Activated CD4-positive, alpha-beta T cell treated with anti-CD3 and anti-CD28 coated beads for 36 hours (primary cell): ENCODE measurements at regions of chr2 and their contacts with region 1.

Region 1: DNA sequence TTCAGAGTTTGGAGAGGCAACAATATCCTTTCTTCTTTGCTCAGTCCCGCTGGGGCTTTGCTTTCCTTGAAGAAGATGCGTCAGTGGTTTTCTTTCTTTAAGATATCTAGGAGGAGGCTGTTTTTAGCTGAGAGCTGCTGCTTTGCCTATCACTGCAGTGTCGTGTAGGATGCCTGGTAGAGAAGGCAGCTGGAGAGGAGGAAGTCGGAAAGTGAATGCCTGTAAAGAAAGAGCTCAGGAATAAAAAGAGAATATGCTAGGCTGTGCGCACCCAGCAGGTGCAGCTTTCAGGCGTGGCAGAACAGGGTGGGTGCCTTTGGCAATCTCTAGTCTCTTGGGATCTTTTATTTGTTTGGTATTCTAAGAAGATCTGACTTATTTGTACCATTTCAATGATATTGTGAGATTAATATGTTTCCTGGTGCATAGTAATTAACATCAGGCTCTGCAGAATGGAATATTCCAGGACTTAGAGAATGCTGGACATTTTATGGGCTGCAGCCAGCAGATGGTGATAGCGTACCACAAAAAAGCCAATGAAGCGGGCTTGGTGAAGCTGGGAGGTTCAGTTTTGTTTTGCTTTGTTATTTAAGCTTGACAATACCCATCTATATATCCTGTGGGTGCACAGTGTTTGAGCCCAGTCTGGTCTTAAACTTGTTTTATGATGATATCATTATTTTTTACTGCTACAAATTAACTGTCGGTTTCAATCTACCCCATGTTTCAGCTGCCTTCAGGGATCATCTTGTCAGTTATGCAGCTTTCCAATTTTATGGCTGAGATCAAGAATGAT is 34.9 kb downstream of the CAVIN2 start:
- DNase-seq: peak; percentile 65
- ATAC-seq: no peak
- H3K4me3 Mint-ChIP-seq: no peak overlapping the region
- H3K27ac Mint-ChIP-seq: no peak overlapping the region
- H3K4me1 Mint-ChIP-seq: no peaks in the 10 kb centered on the region
- H3K27me3 Mint-ChIP-seq: peaks cover 5% of the 10 kb centered on the region

Region 2: GRCh38 chr2:191486584-191487320 is 325.3 kb before region 1 on chr2:
- CTCF ChIA-PET with region 1: no interaction called
- POLR2A ChIA-PET with region 1: no interaction called
- intact Hi-C with region 1: no loop called
- DNase-seq: peak; percentile 32
- ATAC-seq: peak; percentile 57
- H3K4me3 Mint-ChIP-seq: no peak overlapping the region
- H3K27ac Mint-ChIP-seq: no peak overlapping the region
- H3K4me1 Mint-ChIP-seq: peaks cover 2% of the 10 kb centered on the region
- H3K27me3 Mint-ChIP-seq: peaks cover 7% of the 10 kb centered on the region

Region 3: GRCh38 chr2:191797960-191798876 is 13.8 kb before region 1 on chr2:
- CTCF ChIA-PET with region 1: interaction called, 15 read pairs
- POLR2A ChIA-PET with region 1: no interaction called
- intact Hi-C with region 1: no loop called
- DNase-seq: no peak
- ATAC-seq: no peak
- H3K4me3 Mint-ChIP-seq: no peak overlapping the region
- H3K27ac Mint-ChIP-seq: no peak overlapping the region
- H3K4me1 Mint-ChIP-seq: no peaks in the 10 kb centered on the region
- H3K27me3 Mint-ChIP-seq: peaks cover 4% of the 10 kb centered on the region

Region 4: DNA sequence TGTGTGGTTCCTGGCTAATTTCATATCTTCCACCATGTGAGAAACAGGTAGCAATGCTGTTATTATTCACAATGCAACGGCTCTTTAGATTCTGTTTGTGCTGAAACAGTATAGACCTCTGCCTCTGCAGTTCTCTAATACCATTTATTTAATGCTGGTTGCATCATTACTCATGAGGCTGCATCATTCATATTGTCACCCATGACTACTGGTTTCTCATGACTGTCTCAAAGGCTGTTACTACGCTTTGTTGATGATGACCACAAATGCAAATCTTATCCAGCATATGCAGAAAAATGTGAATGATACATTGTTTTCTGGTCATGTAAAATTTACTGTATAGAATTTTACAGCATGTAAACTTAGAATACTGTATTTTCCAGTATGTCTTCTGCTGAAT is 12.4 kb after region 1 on chr2:
- CTCF ChIA-PET with region 1: interaction called, 10 read pairs
- POLR2A ChIA-PET with region 1: no interaction called
- intact Hi-C with region 1: no loop called
- DNase-seq: no peak
- ATAC-seq: peak; percentile 26
- H3K4me3 Mint-ChIP-seq: no peak overlapping the region
- H3K27ac Mint-ChIP-seq: no peak overlapping the region
- H3K4me1 Mint-ChIP-seq: no peaks in the 10 kb centered on the region
- H3K27me3 Mint-ChIP-seq: peaks cover 9% of the 10 kb centered on the region

Region 5: DNA sequence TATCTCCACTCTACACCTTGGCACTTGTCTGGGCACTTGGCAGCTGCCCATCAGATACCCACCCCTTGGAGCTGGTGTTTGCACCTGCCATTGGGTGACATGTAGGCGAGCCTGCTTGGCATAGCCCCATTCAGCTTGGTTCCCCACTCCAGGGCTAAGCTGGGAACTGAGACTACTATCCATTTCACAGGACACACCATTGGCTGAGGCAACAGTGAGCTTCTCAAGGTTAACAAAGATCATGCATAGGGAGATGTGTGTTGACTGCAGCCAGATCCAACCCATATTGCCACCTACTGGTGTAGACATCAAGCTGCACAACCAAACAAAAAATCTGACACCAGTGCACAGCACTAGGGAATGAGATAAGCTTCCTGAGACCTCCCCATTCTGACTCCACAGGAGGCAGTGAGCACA is 1772.5 kb after region 1 on chr2:
- CTCF ChIA-PET with region 1: no interaction called
- POLR2A ChIA-PET with region 1: no interaction called
- intact Hi-C with region 1: loop called in 1 of 2 experiments (anchors 10 kb)
- DNase-seq: no peak
- ATAC-seq: peak; percentile 42
- H3K4me3 Mint-ChIP-seq: no peak overlapping the region
- H3K27ac Mint-ChIP-seq: no peak overlapping the region
- H3K4me1 Mint-ChIP-seq: no peaks in the 10 kb centered on the region
- H3K27me3 Mint-ChIP-seq: no peaks in the 10 kb centered on the region